ENCODE measurements at regions of chr12 and their contacts with region 1.

Region 1: GRCh38 chr12:101923045-101923718 is 45.8 kb downstream of the DRAM1 start:
- DNase-seq: no peak
- H3K4me3 Mint-ChIP-seq: no peak overlapping the region
- H3K27ac Mint-ChIP-seq: no peak overlapping the region
- H3K4me1 Mint-ChIP-seq: peaks cover 4% of the 10 kb centered on the region
- H3K27me3 Mint-ChIP-seq: peaks cover 2% of the 10 kb centered on the region

Region 2: GRCh38 chr12:102811110-102811737 is 888.0 kb after region 1 on chr12:
- CTCF ChIA-PET with region 1: no interaction called
- intact Hi-C with region 1: loop called (anchors 5 kb)
- DNase-seq: peak; percentile 35
- H3K4me3 Mint-ChIP-seq: no peak overlapping the region
- H3K27ac Mint-ChIP-seq: no peak overlapping the region
- H3K4me1 Mint-ChIP-seq: no peaks in the 10 kb centered on the region
- H3K27me3 Mint-ChIP-seq: peaks cover 12% of the 10 kb centered on the region

Measured in activated naive CD4-positive, alpha-beta T cell treated with anti-CD3 and anti-CD28 coated beads for 36 hours (primary cell).